ENCODE measurements at regions of chr10 and their contacts with region 1.

Region 1: DNA sequence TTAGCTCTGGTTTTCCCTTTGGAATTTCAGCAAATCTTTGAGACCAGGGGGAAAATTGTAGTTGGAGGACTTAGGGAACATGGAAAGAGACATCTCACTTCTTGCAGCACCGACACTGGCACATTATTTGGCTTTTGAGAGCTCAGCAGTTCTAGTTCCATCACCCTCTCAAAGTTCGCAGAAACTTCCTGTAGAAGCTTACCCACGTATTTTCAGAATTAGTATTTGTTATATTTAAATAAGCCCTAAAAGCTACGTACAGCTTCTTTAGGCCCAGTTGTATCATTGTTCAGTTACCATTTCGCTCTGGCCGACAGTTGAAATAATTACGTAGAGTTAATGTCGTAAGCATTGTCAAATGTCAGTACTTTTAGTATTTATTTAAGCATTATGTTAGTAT is 13.4 kb downstream of the CEP55 start:
- DNase-seq: no peak
- H3K4me3 Mint-ChIP-seq: no peak overlapping the region
- H3K27ac Mint-ChIP-seq: peak overlapping the region; percentile 68
- H3K4me1 Mint-ChIP-seq: peaks cover 44% of the 10 kb centered on the region
- H3K27me3 Mint-ChIP-seq: no peaks in the 10 kb centered on the region

Region 2: DNA sequence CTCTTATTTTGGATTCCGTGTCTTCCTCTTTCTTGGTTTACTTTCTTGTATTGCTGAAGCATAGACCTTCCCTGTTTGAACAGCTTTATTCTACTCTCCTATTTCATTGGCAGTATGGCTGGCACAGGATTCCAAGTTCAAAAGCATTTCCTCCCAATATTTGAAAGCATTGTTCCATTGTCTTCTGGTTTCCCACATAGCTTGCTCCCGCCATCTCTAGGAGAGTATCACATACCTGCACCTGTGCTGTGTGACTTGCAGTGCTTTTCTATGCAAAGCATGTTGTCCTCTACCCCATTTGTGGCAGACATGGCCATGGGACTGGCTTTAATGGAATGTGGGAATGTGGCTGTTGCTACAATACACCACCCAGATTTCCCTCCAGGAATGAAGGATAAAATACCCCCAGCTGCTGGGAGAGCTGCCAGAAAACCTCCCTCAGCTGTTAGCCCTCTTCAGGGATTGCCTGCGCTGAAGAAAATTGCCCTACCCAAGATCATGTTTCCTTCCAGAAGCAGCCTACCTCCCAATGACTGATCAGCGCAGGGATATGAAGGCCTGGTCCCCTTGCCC is 20.8 kb before region 1 on chr10:
- CTCF ChIA-PET with region 1: interaction called, 116 read pairs
- POLR2A ChIA-PET with region 1: interaction called, 89 read pairs
- DNase-seq: no peak
- H3K4me3 Mint-ChIP-seq: no peak overlapping the region
- H3K27ac Mint-ChIP-seq: no peak overlapping the region
- H3K4me1 Mint-ChIP-seq: no peaks in the 10 kb centered on the region
- H3K27me3 Mint-ChIP-seq: peaks cover 6% of the 10 kb centered on the region

Region 3: DNA sequence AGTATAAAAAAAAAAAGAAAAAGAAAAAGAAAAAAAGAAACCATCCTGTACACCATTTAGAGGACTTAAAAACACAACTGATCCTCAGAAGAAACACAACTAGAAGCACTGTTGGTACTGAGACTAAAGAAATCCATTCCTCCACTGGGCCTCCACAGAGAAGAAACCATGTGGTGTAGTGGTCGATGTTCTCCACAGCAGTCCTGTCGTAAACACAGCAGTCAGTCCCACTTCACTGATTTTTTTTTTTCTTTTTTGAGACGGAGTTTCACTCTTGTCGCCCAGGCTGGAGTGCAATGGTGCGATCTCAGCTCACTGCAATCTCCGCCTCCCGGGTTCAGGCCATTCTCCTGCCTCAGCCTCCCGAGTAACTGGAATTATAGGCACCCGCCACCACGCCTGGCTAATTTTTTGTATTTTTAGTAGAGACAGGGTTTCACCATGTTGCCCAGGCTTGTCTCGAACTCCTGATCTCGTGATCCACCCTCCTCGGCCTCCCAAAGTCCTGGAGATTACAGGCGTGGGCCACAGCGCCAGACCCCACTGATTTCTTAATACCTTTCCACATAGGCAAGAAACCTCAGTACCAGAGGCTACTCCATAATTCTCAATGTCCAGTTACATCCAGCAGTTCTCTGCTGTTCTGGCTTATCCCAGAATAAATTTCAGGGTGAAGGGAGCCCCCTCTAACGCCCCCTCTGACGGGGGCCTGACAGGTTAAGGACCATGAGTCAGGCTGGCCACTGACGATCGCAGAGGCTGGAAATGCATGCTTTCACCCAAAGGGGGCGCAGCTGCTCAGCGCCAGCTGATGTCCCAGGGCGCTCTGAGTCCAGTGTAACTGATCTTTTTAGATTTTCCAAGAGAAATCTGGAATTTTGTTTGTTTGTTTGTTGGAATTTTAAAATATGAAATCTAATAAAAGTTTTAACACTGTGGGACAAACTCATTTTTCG is 31.9 kb after region 1 on chr10:
- CTCF ChIA-PET with region 1: no interaction called
- POLR2A ChIA-PET with region 1: no interaction called
- DNase-seq: peak; percentile 28
- H3K4me3 Mint-ChIP-seq: no peak overlapping the region
- H3K27ac Mint-ChIP-seq: no peak overlapping the region
- H3K4me1 Mint-ChIP-seq: no peaks in the 10 kb centered on the region
- H3K27me3 Mint-ChIP-seq: peaks cover 49% of the 10 kb centered on the region

Region 4: GRCh38 chr10:93667795-93668194 is 158.0 kb after region 1 on chr10:
- CTCF ChIA-PET with region 1: no interaction called
- POLR2A ChIA-PET with region 1: no interaction called
- DNase-seq: no peak
- H3K4me3 Mint-ChIP-seq: no peak overlapping the region
- H3K27ac Mint-ChIP-seq: no peak overlapping the region
- H3K4me1 Mint-ChIP-seq: peaks cover 2% of the 10 kb centered on the region
- H3K27me3 Mint-ChIP-seq: no peaks in the 10 kb centered on the region